GM12878 (cell line): ENCODE measurements at regions of chr3 and their contacts with region 1.

Region 1: GRCh38 chr3:14672588-14672987 is 2.4 kb upstream of the C3orf20 start:
- DNase-seq: no peak
- ATAC-seq: peak; percentile 71
- H3K4me3 ChIP-seq: no peak overlapping the region
- H3K27ac ChIP-seq: no peak overlapping the region
- H3K4me1 ChIP-seq: peaks cover 16% of the 10 kb centered on the region
- H3K27me3 ChIP-seq: no peaks in the 10 kb centered on the region
- CTCF ChIP-seq: no peak
- EP300 ChIP-seq: no peak
- POLR2A ChIP-seq: no peak
- RAD21 ChIP-seq: no peak

Region 2: DNA sequence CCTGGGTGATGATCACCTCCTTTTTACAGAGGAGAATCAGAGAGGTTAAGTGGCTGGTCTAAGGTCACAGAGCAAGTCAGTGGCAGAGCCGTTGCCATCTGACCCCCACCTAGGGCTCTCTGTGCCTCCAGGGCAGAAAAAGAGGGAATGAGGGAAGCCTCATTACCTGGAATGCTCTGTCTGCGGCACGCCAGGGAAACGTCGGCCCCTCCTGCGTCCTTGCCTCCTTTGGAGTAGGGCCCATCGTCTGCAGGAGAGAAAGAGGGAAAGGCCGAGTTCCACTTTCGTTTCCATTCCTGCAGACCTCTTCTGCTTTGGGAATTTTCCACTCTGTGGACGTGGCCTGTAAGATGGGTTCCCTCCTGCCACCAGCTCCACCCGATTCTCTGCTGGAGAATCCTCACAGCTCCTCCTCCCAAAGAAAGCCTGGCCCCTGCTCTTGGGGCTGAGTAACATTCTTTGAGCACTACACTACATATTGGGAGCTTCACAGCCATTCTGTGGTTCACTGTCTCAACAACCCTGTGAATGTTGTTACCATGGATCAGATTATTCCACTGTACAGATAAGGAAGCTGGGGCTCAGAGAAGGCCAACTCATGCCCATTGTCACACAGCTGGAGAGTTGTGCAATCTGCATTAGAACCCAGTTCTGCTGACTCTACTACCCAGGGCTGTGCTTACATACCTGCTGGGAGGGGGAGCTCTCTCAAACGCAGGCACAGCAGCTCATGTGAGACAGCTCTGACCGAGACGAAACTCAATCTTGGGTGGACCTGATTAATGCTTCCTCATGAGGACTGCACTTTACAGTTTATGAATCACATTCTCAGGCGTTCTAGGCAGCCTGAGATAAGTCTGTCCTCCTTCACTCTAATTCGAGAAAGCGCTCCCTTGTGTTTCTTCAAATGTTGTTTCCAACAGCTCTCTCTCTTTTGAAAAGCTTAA is 146.6 kb before region 1 on chr3:
- CTCF ChIA-PET with region 1: no interaction called
- POLR2A ChIA-PET with region 1: no interaction called
- RAD21 ChIA-PET with region 1: no interaction called
- SMC1A ChIA-PET with region 1: no interaction called
- in situ Hi-C with region 1: no loop called
- intact Hi-C with region 1: no loop called
- DNase-seq: no peak
- ATAC-seq: peak; percentile 47; the same call in 2 of the 3 replicates
- H3K4me3 ChIP-seq: no peak overlapping the region
- H3K27ac ChIP-seq: no peak overlapping the region
- H3K4me1 ChIP-seq: no peaks in the 10 kb centered on the region
- H3K27me3 ChIP-seq: peaks cover 0 to 2% of the 10 kb centered on the region in 2 experiments; a peak in 3 of 4 replicates
- CTCF ChIP-seq: no peak
- EP300 ChIP-seq: no peak
- POLR2A ChIP-seq: no peak
- RAD21 ChIP-seq: no peak

Region 3: DNA sequence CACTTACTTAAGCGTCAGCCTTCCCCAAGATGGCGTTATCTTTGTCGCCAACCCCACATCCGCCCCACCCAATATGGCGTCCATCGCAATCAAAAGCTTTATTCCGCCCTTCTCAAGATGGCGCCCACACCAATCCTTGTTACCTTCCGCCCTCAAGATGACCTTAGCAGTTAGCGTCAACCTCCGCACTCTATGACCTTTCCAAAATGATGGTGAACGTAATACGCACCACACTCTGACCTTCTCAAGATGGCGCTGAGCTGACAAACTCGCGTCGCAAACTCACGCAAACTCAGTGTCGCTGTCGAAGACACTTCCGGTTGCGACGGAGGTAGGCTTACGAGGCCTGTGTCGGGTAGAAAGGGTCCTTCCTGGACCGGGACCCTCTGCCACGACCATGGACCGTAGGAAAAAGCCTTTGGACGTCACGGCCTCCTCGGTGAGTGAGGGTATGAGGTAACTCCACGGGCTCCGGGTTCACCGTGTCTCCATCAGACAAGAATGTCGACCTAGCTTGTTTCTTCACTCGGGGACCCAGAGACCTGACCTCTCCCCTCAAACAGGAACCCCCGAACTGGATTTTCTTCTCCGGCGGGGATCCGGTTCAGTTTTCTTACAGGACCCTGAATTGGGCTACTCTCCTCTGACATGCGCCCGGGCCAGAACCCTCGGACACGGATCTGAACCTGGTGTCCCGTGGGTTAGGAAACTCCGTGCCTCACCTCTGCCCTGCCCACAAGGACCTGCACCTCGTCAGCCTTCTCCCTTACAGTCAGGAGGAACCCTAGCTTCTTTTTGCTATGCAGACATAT is 20.9 kb before region 1 on chr3 and contains the start of gene CCDC174:
- CTCF ChIA-PET with region 1: interaction called, 8 read pairs
- POLR2A ChIA-PET with region 1: interaction called, 4 read pairs
- RAD21 ChIA-PET with region 1: no interaction called
- SMC1A ChIA-PET with region 1: interaction called, 20 read pairs
- in situ Hi-C with region 1: no loop called
- intact Hi-C with region 1: no loop called
- DNase-seq: peak; percentile 100
- ATAC-seq: peak; percentile 97
- H3K4me3 ChIP-seq: peak within 1 kb of the TSS; percentile 84
- H3K27ac ChIP-seq: peak within 1 kb of the TSS; percentile 91
- H3K4me1 ChIP-seq: no peaks in the 10 kb centered on the region
- H3K27me3 ChIP-seq: no peaks in the 10 kb centered on the region
- CTCF ChIP-seq: no peak
- EP300 ChIP-seq: no peak; a peak in 1 of 4 replicates
- POLR2A ChIP-seq: peak; percentile 99
- RAD21 ChIP-seq: no peak
- polyA plus RNA-seq, gene CCDC174: 26.1 to 31.3 TPM

Region 4: GRCh38 chr3:14691239-14691638 is 18.7 kb after region 1 on chr3:
- CTCF ChIA-PET with region 1: interaction called, 49 read pairs
- POLR2A ChIA-PET with region 1: interaction called, 6 read pairs
- RAD21 ChIA-PET with region 1: interaction called, 20 read pairs
- SMC1A ChIA-PET with region 1: interaction called, 42 read pairs
- in situ Hi-C with region 1: no loop called
- intact Hi-C with region 1: no loop called
- DNase-seq: peak; percentile 74
- ATAC-seq: peak; percentile 69
- H3K4me3 ChIP-seq: peak overlapping the region; percentile 4; the same call in 1 of the 2 replicates
- H3K27ac ChIP-seq: peak overlapping the region; percentile 76
- H3K4me1 ChIP-seq: peaks cover 47% of the 10 kb centered on the region
- H3K27me3 ChIP-seq: no peaks in the 10 kb centered on the region
- CTCF ChIP-seq: no peak
- EP300 ChIP-seq: peak; percentile 82 to 87
- POLR2A ChIP-seq: peak; percentile 47; the same call in 1 of the 2 replicates
- RAD21 ChIP-seq: no peak

Region 5: DNA sequence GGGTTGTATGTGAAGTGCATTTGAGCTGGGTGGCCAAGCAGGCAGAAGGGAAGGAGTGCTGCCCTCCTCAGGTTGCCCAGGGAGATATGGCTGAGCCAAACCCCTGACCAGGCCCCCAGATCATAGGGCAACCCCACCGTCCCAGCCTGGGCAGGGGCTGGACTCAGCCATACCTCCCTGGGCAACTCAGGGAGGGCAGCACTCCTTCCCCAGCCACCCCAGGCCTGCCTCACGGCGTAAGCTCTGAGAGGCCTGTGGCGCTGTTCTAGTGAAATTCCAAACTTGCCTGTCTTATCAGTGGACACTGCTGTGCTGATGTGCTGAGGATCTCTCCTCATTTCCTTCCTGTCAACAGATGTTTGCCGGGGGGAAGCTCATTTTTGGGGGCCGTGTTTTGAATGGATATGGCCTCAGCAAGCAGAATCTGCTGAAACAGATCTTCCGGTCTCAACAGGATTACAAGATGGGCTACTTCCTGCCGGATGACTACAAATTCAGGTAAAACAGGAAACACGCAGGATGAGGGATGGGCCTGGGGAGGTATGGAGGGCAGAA is 88.6 kb after region 1 on chr3:
- CTCF ChIA-PET with region 1: interaction called, 6 read pairs
- POLR2A ChIA-PET with region 1: no interaction called
- RAD21 ChIA-PET with region 1: interaction called, 11 read pairs
- SMC1A ChIA-PET with region 1: interaction called, 6 read pairs
- in situ Hi-C with region 1: no loop called
- intact Hi-C with region 1: no loop called
- DNase-seq: no peak
- ATAC-seq: peak; percentile 50; the same call in 2 of the 3 replicates
- H3K4me3 ChIP-seq: no peak overlapping the region
- H3K27ac ChIP-seq: no peak overlapping the region
- H3K4me1 ChIP-seq: no peaks in the 10 kb centered on the region
- H3K27me3 ChIP-seq: no peaks in the 10 kb centered on the region
- CTCF ChIP-seq: no peak
- EP300 ChIP-seq: no peak
- POLR2A ChIP-seq: no peak
- RAD21 ChIP-seq: no peak

Region 6: DNA sequence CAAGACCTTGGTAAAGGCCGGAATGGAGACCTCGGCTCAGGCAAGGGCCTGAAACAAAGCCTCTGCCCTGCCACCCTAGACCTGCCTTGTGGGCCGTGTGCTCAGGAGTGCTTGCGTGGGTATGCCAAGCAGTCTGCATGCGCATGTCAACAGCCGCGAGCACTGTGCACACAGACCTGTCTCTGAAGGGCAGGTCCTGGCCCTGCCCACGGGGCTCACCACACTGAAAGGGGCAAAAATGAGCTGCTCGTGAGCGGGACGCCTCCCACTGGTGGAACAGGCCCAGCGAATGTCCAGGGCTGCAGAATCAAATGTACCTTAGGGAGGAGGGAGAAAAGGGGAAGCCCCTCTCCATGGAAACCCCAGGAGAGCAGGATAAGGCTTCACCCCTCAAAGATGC is 101.8 kb after region 1 on chr3:
- CTCF ChIA-PET with region 1: interaction called, 321 read pairs
- POLR2A ChIA-PET with region 1: no interaction called
- RAD21 ChIA-PET with region 1: interaction called, 197 read pairs
- SMC1A ChIA-PET with region 1: interaction called, 274 read pairs
- in situ Hi-C with region 1: no loop called
- intact Hi-C with region 1: no loop called
- DNase-seq: no peak
- ATAC-seq: no peak
- H3K4me3 ChIP-seq: no peak overlapping the region
- H3K27ac ChIP-seq: no peak overlapping the region
- H3K4me1 ChIP-seq: no peaks in the 10 kb centered on the region
- H3K27me3 ChIP-seq: no peaks in the 10 kb centered on the region
- CTCF ChIP-seq: no peak
- EP300 ChIP-seq: no peak
- POLR2A ChIP-seq: no peak
- RAD21 ChIP-seq: no peak